ENCODE measurements at regions of chr18 and their contacts with region 1.

Region 1: DNA sequence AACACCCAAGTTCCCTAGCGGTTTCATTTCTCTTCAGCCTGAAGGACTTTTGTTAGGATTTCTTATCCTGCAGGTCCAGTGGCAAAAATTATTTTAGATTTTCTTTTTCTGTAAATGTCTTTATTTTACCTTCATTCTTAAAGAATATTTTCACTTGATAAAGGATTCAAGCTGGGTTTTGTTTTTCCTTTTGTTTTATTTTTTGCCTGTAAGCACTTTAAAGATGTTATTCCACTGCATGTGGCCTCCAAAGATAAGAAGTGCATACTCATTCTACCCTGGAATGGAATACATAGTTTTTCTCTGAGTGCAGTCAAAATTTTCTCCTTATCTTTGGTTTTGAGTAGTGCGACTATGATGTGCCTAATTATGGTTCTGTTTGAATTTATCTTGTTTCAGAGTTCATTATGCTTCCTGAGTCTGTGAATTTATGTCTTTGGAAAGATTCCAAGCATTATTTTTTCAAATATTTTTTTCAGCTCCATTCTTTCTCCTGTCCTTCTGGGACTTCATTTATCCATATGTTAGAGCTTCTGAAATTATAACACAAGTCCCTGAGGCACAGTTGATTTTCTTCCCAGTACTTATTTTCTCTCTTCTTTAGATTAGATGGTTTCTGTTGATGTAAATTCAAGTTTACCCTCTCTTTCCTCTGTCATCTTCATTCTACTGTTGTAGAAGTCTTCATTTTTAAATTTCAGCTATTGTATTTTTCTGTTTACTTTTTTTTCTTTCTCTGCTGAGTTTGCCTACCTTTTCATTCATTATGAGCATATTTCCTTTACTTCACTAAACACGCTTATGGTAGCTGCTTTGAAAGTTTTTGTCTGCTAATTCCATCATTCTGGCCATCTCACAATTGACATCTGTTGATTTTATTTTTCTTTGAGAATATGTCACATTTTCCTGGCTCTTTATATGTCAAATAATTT is 69.6 kb downstream of the MAPRE2 start:
- DNase-seq: no peak
- ATAC-seq: no peak
- H3K4me3 Mint-ChIP-seq: no peak overlapping the region
- H3K27ac Mint-ChIP-seq: no peak overlapping the region
- H3K4me1 Mint-ChIP-seq: peaks cover 59% of the 10 kb centered on the region
- H3K27me3 Mint-ChIP-seq: no peaks in the 10 kb centered on the region
- CTCF ChIP-seq: no peak

Region 2: DNA sequence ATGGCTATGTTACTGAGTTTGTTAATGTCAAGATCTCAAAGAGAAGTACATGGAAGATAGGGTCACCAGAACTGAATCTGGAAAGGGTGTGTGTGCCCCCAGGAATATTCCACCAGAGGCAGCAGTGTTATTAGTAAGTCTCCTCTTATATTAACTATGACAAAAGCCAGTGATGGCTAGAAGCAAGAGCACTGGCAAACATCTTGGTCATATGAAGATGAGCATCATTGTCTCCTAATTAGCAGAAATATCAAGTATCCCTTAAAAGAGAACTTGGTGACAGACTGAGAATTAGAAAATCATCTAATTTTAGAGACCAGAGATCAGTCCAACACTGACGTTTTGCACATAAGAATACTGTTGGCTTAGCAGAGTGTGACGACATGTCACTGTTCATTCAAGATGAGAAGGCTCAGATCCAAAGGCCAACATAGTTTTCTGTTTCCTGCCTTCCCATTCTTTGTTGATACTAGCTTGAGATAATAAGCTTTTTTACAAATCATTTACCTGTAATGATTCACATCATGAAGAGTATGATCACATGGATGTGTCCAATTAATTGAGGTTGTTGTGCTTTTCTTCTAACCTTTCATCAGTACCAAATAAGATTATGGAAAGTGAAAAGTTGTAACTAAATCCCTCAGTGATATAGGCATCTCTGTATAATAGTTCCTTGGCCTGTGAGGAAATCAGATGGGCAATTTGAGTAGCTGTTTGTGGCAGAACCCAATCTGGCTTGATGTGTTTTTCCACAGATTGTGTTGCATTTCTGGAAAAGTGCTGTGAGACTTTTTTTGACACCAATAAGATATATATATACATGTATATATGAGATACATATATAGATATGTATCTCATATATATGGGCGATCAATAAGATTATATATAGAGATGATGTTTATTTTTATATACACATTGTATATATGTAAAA is 25.1 kb before region 1 on chr18:
- CTCF ChIA-PET with region 1: interaction called, 3 read pairs
- POLR2A ChIA-PET with region 1: no interaction called
- intact Hi-C with region 1: loop called (anchors 2 kb)
- DNase-seq: no peak
- ATAC-seq: no peak
- H3K4me3 Mint-ChIP-seq: no peak overlapping the region
- H3K27ac Mint-ChIP-seq: no peak overlapping the region
- H3K4me1 Mint-ChIP-seq: peaks cover 16% of the 10 kb centered on the region
- H3K27me3 Mint-ChIP-seq: no peaks in the 10 kb centered on the region
- CTCF ChIP-seq: no peak

Region 3: GRCh38 chr18:35153609-35154272 is 42.9 kb after region 1 on chr18:
- CTCF ChIA-PET with region 1: no interaction called
- POLR2A ChIA-PET with region 1: interaction called, 12 read pairs
- intact Hi-C with region 1: no loop called
- DNase-seq: no peak
- ATAC-seq: peak; percentile 40
- H3K4me3 Mint-ChIP-seq: no peak overlapping the region
- H3K27ac Mint-ChIP-seq: peak overlapping the region; percentile 53
- H3K4me1 Mint-ChIP-seq: peaks cover 30% of the 10 kb centered on the region
- H3K27me3 Mint-ChIP-seq: no peaks in the 10 kb centered on the region
- CTCF ChIP-seq: no peak